Thyroid gland (tissue), 4 donors: ENCODE measurements at regions of chr16 and their contacts with region 1.

Region 1: GRCh38 chr16:88811769-88812512 is at the start of gene APRT:
- DNase-seq: peak; percentile 94 to 95
- H3K4me3 ChIP-seq: peak within 1 kb of the TSS in 2 of 3 donors; percentile 41 to 65
- H3K27ac ChIP-seq: peak within 1 kb of the TSS; percentile 75 to 94 (median 83)
- H3K4me1 ChIP-seq: peaks cover 19 to 29% of the 10 kb centered on the region in 2 donors
- H3K27me3 ChIP-seq: no peaks in the 10 kb centered on the region
- CTCF ChIP-seq: peak in 3 of 6 experiments; percentile 22 to 46 (median 41)
- POLR2A ChIP-seq: peak in 1 of 2 donors; percentile 74
- total RNA-seq, gene APRT: 88.9 to 182 (median 118) TPM

Region 2: DNA sequence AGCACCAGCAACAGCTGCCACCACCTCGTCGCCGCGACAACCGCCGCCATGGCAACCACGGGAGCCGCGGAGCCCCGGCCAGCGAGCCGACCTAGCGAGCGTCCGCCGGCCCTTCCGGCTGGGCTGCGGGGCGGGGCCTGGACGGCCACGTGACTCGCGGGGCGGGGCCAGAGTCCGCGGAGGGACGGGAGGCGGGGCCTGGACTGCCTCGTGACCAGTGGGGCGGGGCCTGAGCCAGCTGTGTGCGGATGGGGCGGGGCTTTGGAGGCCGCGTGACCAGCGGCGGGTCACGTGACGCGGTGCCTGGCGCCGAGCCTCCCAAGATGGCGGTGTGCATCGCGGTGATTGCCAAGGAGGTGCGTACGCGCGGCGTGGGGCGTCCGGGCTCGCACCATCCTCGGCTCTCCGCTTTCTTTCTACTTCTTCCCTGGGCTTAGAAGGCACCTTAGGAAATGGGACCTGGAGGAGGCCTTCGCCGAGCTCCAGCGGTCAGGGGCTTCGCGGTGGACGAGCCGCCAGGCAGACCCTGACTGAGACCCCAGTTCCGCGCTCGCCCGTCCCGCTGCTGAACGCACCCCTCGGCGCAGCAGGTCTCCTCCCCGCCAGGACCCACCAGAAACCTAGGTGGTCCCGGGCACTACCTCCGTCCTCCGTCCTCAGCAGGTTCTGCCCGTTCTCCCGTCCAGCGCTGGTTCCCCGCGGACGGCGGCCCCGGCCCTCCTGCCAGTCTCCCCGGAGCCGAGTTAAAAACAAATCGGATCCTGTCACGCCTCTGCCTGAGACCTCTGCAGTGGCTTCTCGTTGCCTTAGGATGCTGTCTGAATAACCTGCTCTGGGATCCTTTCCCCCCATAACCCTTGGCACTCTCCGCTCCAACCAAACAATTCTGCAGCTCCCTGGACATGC is 45.1 kb after region 1 on chr16 and contains the starts of genes GALNS and TRAPPC2L:
- intact Hi-C with region 1: loop called (anchors 5 kb)
- DNase-seq: peak; percentile 99
- H3K4me3 ChIP-seq: peak within 1 kb of the TSS; percentile 56 to 98 (median 88)
- H3K27ac ChIP-seq: peak within 1 kb of the TSS; percentile 53 to 70 (median 56)
- H3K4me1 ChIP-seq: peaks cover 14 to 17% of the 10 kb centered on the region in 2 donors
- H3K27me3 ChIP-seq: no peaks in the 10 kb centered on the region
- CTCF ChIP-seq: peak in 1 of 6 experiments; percentile 28
- POLR2A ChIP-seq: peak; percentile 57 to 91
- total RNA-seq, gene GALNS: 14.4 to 41.9 (median 33.0) TPM
- total RNA-seq, gene TRAPPC2L: 18.9 to 50.4 (median 43.8) TPM

Region 3: DNA sequence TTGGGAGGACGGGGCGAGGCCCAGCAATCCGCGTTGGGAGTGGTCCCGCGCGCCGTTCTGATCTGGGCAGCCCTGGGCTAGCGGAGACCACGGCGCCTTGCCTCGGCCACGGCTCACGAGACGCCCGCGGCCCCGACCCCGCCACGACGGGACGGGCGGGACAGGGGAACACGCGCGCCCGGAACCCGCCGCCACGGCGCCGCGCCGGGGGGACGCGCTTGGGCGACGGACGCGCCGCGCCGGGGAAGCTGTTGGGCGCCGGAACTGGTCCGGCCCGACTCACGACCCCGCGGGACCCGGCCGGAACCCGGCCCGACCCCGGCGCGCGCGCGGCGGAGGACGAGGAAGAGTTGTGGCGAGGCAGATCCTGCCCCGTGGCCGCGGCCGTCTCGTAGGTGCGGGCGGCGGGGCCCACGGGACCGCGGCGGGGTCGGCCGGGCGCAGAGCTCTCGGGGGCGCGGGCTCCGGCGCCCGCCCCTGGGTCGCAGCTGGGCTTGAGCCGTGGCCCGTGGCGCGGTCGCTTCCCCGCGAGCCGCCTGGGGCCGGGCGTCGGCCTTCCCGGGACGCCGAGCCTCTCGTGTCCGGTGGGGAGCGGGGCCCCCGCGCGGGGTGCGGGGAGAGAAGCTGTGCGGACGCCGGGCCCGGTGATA is 281.8 kb after region 1 on chr16 and contains the start of gene ACSF3:
- intact Hi-C with region 1: loop called (anchors 10 kb)
- DNase-seq: peak; percentile 57 to 59
- H3K4me3 ChIP-seq: peak within 1 kb of the TSS; percentile 61 to 85 (median 71)
- H3K27ac ChIP-seq: peak within 1 kb of the TSS in 1 of 3 donors; percentile 62
- H3K4me1 ChIP-seq: peaks cover 24 to 34% of the 10 kb centered on the region in 2 donors
- H3K27me3 ChIP-seq: no peaks in the 10 kb centered on the region
- CTCF ChIP-seq: peak in 1 of 6 experiments; percentile 6
- POLR2A ChIP-seq: no peak
- total RNA-seq, gene ACSF3: 30.1 to 51.2 (median 33.4) TPM

Region 4: DNA sequence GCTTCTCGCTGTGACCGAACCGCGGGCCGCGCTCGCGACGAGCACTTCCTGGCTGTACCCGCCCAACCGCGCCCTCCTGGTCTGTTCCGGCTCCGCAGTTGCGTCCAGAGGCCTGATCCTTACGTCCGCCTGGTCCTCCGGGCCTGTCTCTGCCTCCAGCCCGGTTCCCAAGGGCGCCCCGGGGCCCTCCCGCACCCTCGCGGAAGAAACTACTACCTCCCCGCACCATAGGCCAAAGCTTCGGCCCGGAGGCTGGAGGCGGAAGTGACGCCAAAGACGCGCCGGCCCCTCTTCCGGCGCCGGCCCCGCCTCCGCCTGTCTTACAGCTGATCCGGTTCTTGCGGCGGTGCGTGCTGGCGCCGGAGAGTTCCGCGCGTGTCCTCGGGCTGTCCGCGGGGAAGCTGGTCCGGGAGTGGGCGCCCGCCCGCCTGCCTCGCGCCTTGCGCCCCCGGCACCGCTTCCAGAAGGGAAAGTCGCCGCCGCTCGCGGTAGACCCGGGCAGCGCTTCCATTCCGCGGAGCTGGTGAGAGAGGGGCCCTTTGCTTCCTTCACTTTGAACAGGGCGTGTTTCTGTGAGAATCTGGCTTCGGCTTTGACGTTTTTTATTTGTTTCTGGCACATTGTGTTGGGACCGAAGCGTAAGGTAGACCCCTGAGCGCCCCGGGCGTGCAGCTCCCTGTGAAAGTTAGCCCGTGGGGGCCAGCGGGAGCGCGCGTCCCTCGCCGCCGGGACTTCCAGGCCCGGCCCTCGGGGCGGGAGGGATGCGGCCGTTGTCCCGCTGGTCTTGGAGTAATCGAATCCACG is 405.6 kb after region 1 on chr16 and contains the start of gene ZNF778:
- intact Hi-C with region 1: loop called (anchors 10 kb)
- DNase-seq: peak; percentile 82 to 83
- H3K4me3 ChIP-seq: peak within 1 kb of the TSS; percentile 76 to 89 (median 84)
- H3K27ac ChIP-seq: peak within 1 kb of the TSS; percentile 81 to 90 (median 83)
- H3K4me1 ChIP-seq: peaks cover 12 to 19% of the 10 kb centered on the region in 2 donors
- H3K27me3 ChIP-seq: no peaks in the 10 kb centered on the region
- CTCF ChIP-seq: no peak
- POLR2A ChIP-seq: peak in 1 of 2 donors; percentile 89
- total RNA-seq, gene ZNF778: 17.5 to 36.4 (median 30.9) TPM